Breast epithelium (tissue), 4 donors: ENCODE measurements at regions of chr6 and their contacts with region 1.

Region 1: DNA sequence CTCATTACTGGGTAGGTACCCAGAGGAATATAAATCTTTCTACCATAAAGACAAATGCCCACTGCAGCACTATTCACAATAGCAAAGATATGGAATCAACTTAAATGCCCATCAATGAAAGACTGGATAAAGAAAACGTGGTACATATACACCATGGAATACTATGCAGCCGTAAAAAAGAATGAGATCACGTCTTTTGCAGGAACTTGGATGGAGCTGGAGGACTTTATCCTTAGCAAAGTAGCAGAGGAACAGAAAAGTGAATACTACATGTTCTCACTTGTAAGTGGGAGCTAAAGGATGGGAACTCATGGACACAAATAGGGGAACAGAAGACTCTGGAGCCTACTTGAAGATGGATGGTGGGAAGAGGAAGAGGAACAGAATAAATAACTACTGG is 119.7 kb downstream of the EPHA7 start:
- DNase-seq: no peak
- H3K4me3 ChIP-seq: no peak overlapping the region
- H3K27ac ChIP-seq: no peak overlapping the region
- H3K4me1 ChIP-seq: no peaks in the 10 kb centered on the region
- H3K27me3 ChIP-seq: no peaks in the 10 kb centered on the region
- CTCF ChIP-seq: no peak
- POLR2A ChIP-seq: no peak

Region 2: GRCh38 chr6:93248631-93249030 is 51.0 kb before region 1 on chr6:
- intact Hi-C with region 1: no loop called
- DNase-seq: no peak
- H3K4me3 ChIP-seq: no peak overlapping the region
- H3K27ac ChIP-seq: no peak overlapping the region
- H3K4me1 ChIP-seq: no peaks in the 10 kb centered on the region
- H3K27me3 ChIP-seq: no peaks in the 10 kb centered on the region
- CTCF ChIP-seq: no peak
- POLR2A ChIP-seq: no peak

Region 3: GRCh38 chr6:93341900-93342613 is 42.4 kb after region 1 on chr6:
- intact Hi-C with region 1: loop called (anchors 2 kb)
- DNase-seq: no peak
- H3K4me3 ChIP-seq: no peak overlapping the region
- H3K27ac ChIP-seq: no peak overlapping the region
- H3K4me1 ChIP-seq: no peaks in the 10 kb centered on the region
- H3K27me3 ChIP-seq: no peaks in the 10 kb centered on the region
- CTCF ChIP-seq: no peak
- POLR2A ChIP-seq: no peak

Region 4: GRCh38 chr6:94487371-94487770 is 1187.7 kb after region 1 on chr6:
- intact Hi-C with region 1: no loop called
- DNase-seq: no peak
- H3K4me3 ChIP-seq: no peak overlapping the region
- H3K27ac ChIP-seq: no peak overlapping the region
- H3K4me1 ChIP-seq: no peaks in the 10 kb centered on the region
- H3K27me3 ChIP-seq: no peaks in the 10 kb centered on the region
- CTCF ChIP-seq: no peak
- POLR2A ChIP-seq: no peak